Left ventricle myocardium superior (tissue), 1 donor: ENCODE measurements at regions of chr3 and their contacts with region 1.

Region 1: DNA sequence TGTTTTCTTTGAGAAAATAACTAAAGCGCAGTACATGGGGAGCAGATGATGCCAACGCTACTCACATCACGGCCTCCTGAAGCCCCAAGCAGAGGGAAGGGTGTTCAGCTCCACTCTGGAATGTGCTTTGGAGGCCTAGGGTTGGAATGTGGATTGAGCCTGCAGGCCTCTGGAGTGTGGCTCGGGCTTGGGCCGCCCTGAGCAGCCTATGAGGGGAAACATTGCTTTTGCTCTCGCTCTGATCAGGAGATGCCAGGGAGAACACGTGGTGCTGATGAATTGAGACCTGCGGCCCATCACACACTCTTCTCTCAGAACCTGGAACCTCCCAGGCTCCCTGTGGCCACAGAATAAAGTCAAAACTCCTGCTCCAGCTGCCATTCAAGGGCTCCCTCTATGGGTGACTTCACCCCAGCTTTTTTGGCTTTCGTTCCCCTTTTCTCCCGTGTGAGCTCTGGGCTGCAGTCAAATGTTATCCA is 23.3 kb downstream of the CCDC13 start:
- DNase-seq: no peak
- ATAC-seq: peak; percentile 39

Region 2: GRCh38 chr3:42581709-42582473 is 167.9 kb before region 1 on chr3 and contains the start of gene SEC22C:
- intact Hi-C with region 1: loop called (anchors 10 kb)
- DNase-seq: peak; percentile 97
- ATAC-seq: peak; percentile 98
- total RNA-seq, gene SEC22C: 24.3 TPM

Region 3: DNA sequence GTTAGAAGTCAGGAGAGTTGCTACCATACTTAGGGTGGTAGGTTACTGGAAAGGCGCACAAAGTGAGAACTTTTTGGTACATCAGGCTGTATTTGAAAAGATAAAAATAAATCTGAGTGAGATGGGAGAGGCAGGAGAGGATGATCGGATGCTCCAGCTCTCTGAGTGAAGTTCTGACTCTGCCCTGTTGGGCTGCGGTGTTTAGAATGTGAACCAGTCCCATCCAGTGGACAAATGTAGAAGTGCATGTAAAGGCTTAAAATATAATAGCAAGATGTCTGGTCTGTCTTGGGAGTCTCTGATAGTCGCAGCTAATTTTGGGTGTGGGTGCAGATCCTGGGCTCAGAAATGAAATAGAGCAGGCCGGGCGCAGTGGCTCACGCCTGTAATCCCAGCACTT is 89.8 kb after region 1 on chr3:
- intact Hi-C with region 1: no loop called
- DNase-seq: peak; percentile 36
- ATAC-seq: peak; percentile 85